ENCODE measurements at regions of chr16 and their contacts with region 1.

Region 1: DNA sequence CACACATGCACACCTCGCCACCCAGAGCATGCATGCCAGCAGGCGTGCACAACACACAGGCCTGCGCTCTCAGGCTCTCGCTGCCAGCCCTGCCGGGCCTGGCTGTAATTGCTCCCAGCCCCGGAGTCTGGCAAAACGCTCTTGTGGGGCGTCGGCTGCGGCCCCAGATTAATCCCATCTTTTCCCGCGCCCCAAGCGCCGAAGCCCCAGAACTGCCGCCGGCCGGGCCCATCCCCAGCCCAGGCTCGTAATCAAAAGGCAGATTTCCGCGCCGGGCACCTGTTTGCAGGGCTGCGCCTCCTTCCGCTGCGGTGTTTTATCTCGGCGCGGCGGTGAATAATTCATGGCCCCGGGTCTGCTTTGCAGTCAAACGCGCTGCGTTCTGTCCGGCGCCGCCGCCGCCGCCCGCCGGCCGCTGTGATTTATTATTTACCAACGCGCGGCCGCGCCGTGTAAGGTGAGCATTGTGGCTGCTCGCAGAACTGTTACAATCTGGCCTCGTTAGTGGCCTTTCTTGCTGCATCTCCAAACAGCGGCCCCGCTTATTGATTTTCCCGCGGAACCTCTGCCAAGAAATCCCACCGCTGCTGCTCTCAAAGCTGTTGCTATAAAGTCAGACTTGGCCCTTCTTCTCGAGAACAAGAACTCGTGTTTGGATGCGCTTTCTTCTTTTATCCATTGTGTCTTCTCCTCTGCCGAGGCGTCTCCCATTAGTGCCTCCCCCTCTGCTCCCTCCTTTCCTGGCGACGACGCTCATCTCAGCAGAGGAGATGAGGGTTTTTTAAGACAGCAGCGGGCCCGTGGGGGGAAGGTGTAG is 126.1 kb downstream of the IRX5 start:
- DNase-seq: peak in 1 of 2 donors; percentile 46
- H3K4me3 ChIP-seq: peak overlapping the region; percentile 23 to 42
- H3K27ac ChIP-seq: no peak overlapping the region
- H3K4me1 ChIP-seq: peaks cover 0 to 8% (median 7%) of the 10 kb centered on the region in 4 donors
- H3K27me3 ChIP-seq: peaks cover 0 to 29% of the 10 kb centered on the region in 2 donors
- CTCF ChIP-seq: no peak

Region 2: DNA sequence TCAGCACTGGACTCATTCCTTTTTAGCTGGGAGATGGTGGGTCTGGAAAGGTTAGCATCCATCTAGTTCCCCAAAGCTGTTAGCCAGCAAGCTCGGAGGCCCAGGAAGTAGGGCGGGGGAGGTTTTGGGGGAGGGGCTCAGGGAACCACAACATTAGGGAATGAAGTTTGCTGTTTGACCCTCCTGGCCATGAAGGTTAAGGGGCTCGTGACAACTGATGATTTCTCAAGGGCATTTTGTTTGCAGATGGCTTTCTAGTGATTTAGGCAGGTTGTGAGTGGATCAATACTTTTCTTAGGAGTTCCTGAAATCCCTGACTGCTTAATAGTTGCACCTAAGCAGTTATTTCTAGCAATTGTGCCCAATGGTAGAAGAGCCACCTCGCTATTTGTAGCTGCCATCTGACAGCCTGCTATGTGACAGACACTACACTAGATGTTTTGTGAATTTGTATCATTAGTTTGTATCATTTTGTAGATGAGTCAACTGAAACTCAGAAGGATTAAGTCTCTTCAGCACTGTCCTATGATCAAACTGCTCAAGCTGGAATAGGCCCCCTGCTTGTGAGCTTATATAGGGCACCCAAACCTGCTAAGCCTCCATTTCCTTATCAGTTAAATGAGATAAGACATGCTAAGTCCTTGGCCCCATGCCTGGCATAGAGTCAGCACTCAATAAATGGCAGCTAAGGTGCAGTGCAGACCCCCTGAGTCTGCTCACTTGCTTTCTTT is 916.6 kb before region 1 on chr16:
- intact Hi-C with region 1: loop called (anchors 10 kb)
- DNase-seq: no peak
- H3K4me3 ChIP-seq: no peak overlapping the region
- H3K27ac ChIP-seq: no peak overlapping the region
- H3K4me1 ChIP-seq: no peaks in the 10 kb centered on the region
- H3K27me3 ChIP-seq: peaks cover 0 to 5% of the 10 kb centered on the region in 2 donors
- CTCF ChIP-seq: no peak

Region 3: GRCh38 chr16:54912720-54913119 is 144.1 kb before region 1 on chr16:
- intact Hi-C with region 1: no loop called
- DNase-seq: no peak
- H3K4me3 ChIP-seq: no peak overlapping the region
- H3K27ac ChIP-seq: no peak overlapping the region
- H3K4me1 ChIP-seq: peaks cover 0 to 8% (median 0%) of the 10 kb centered on the region in 4 donors
- H3K27me3 ChIP-seq: no peaks in the 10 kb centered on the region
- CTCF ChIP-seq: no peak